ENCODE measurements at regions of chr12 and their contacts with region 1.

Region 1: GRCh38 chr12:26884765-26885576 is 52.0 kb upstream of the ITPR2 start:
- DNase-seq: peak; percentile 84
- H3K4me3 Mint-ChIP-seq: no peak overlapping the region
- H3K27ac Mint-ChIP-seq: no peak overlapping the region
- H3K4me1 Mint-ChIP-seq: peaks cover 12% of the 10 kb centered on the region
- H3K27me3 Mint-ChIP-seq: peaks cover 8% of the 10 kb centered on the region

Region 2: DNA sequence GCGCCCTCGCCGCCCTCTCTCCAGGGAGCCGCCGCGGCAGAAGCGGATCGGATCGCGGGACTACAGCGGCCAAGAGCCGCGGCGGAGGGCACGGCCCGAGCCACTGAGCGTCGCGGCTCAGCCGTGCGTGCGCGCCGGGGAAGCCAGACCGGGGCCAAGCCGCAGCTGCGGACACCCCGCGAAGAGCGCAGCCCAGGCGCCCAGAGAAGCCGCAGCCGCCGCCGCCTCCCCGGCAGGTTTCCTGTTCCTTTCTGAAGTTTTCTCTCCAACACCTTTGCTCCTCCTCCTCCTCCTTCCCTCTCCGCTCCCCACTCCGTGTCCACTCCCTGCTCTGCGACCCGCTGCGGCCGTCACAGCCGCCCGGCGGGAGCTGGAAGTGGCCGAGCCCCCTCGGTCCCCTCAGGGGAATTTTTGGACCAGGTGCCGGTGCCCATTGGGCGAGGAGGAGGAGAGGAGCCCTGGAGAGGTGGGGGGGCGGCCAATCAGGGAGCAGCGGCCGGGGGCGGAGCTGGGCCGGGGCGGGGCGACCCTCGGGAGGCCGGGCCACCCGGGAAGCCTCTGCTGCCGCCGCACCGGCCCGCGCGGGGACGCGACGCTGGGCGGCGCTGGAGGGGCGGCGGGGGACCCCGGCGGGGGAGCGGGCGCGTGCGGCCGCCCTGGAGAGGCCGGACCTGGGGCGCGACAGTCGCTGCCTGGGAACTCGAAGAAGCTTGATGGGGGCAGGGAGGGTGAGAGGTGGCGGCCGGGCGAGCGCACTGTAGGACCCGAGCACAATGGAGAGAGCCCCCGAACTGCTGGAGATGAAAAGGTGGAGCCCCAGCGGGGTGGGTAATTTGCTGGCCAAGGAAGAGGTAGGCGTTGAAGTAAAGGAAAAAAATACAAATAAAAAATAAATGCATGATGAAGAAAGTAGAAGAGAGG is 51.9 kb before region 1 on chr12 and contains the start of gene ITPR2:
- CTCF ChIA-PET with region 1: interaction called, 21 read pairs
- POLR2A ChIA-PET with region 1: interaction called, 12 read pairs
- DNase-seq: peak; percentile 93
- H3K4me3 Mint-ChIP-seq: peak within 1 kb of the TSS; percentile 92
- H3K27ac Mint-ChIP-seq: peak within 1 kb of the TSS; percentile 94
- H3K4me1 Mint-ChIP-seq: peaks cover 37% of the 10 kb centered on the region
- H3K27me3 Mint-ChIP-seq: no peaks in the 10 kb centered on the region
- total RNA-seq, gene ITPR2: 31.7 to 36.3 TPM

Region 3: GRCh38 chr12:26853303-26854030 is 31.5 kb before region 1 on chr12:
- CTCF ChIA-PET with region 1: interaction called, 19 read pairs
- POLR2A ChIA-PET with region 1: interaction called, 3 read pairs
- DNase-seq: peak; percentile 79
- H3K4me3 Mint-ChIP-seq: no peak overlapping the region
- H3K27ac Mint-ChIP-seq: no peak overlapping the region
- H3K4me1 Mint-ChIP-seq: no peaks in the 10 kb centered on the region
- H3K27me3 Mint-ChIP-seq: peaks cover 11% of the 10 kb centered on the region

Region 4: DNA sequence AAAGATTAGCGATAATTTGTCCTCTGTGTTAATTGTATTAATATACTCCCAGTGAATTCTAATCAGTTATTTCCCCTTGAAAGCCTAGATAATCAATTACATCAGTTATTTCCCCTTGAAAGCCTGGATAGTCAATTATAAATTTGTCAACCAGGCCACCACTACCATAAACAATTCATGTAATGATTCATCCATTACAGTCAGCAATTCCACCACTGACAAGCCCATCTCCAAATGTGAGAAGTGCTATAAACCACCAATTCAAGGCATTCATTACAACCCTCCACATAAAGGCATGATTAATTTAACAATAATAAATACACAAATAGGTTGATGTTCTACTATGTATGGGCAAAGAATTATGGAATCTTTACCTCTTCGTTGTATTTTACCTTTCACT is 11.9 kb after region 1 on chr12:
- CTCF ChIA-PET with region 1: interaction called, 12 read pairs
- POLR2A ChIA-PET with region 1: no interaction called
- DNase-seq: no peak
- H3K4me3 Mint-ChIP-seq: no peak overlapping the region
- H3K27ac Mint-ChIP-seq: no peak overlapping the region
- H3K4me1 Mint-ChIP-seq: no peaks in the 10 kb centered on the region
- H3K27me3 Mint-ChIP-seq: no peaks in the 10 kb centered on the region

Region 5: DNA sequence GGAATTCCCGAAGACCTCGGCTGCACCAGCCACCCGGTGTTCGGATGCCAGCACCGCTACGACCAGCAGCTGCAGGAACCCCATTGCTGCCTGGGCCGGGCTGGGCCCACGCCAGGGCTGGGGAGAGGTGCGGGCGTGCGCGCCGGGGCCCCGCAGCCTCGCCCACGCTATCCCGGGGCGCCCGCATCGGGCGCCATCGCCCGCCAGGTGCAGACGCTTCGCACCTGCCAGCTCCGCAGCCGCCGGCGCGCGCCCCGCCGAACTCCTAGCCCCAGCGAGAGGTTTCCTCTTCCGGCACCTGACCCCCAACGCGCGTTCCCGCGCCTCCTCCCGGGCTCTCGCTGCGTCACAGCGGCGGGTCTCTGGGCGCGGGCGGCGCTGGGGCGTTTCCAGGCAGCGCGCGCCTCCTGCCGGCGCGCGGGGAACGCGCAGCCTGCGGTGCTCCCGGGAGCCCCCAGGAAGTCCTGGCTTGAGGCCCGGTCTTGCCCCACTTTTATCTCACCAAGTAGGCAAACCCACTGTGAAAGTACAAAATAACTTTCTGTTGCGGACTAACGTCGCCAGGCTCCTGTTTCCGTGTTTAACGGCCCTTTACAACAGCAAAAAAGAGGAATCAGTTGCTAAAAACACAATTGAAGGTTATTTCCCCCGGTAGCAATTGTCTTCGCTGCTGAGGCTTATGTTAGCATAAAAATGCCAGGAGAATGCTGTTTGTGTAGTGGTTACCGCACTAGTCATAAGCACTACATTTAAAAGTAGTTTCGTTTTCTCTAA is 129.3 kb after region 1 on chr12 and contains the start of gene TM7SF3:
- CTCF ChIA-PET with region 1: interaction called, 28 read pairs
- POLR2A ChIA-PET with region 1: no interaction called
- DNase-seq: peak; percentile 96
- H3K4me3 Mint-ChIP-seq: peak within 1 kb of the TSS; percentile 90
- H3K27ac Mint-ChIP-seq: peak within 1 kb of the TSS; percentile 95
- H3K4me1 Mint-ChIP-seq: peaks cover 60% of the 10 kb centered on the region
- H3K27me3 Mint-ChIP-seq: no peaks in the 10 kb centered on the region
- total RNA-seq, gene TM7SF3: 33.6 to 35.7 TPM